HCT116 (cell line): ENCODE measurements at regions of chr5 and their contacts with region 1.

Region 1: GRCh38 chr5:174520420-174521380 is 203.7 kb upstream of the MSX2 start:
- DNase-seq: peak; percentile 93
- ATAC-seq: peak; percentile 92
- H3K4me3 ChIP-seq: peak overlapping the region in 1 of 2 experiments; percentile 8; a peak in 1 of 4 replicates
- H3K27ac ChIP-seq: peak overlapping the region; percentile 17; the same call in 1 of the 2 replicates
- H3K4me1 ChIP-seq: peaks cover 23 to 44% of the 10 kb centered on the region in 2 experiments
- H3K27me3 ChIP-seq: peaks cover 54% of the 10 kb centered on the region; the same call in 1 of the 2 replicates
- CTCF ChIP-seq: no peak
- POLR2A ChIP-seq: no peak
- RAD21 ChIP-seq: peak; percentile 36; the same call in 1 of the 2 replicates

Region 2: DNA sequence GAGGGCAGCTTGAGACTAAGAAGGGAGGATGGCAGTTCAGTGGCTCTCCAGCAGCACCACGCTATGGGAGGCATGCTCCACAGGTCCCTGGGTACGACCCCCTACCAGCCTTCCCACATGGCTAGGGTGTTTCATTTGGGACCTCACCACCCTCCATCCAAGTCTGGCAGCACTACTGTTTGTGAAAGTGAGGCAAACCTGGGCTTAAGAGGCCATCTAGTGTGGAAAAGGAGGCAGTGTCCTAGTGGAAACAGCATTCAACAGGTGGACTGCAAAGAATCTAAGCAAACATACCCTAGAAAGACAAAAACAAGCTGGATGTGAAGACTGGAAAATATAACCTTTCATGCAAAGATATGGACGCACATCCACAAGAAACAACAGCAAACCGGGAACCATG is 536.5 kb before region 1 on chr5:
- CTCF ChIA-PET with region 1: no interaction called
- POLR2A ChIA-PET with region 1: no interaction called
- RAD21 ChIA-PET with region 1: no interaction called
- intact Hi-C with region 1: no loop called
- DNase-seq: peak; percentile 34
- ATAC-seq: peak; percentile 83
- H3K4me3 ChIP-seq: no peak overlapping the region
- H3K27ac ChIP-seq: no peak overlapping the region
- H3K4me1 ChIP-seq: no peaks in the 10 kb centered on the region
- H3K27me3 ChIP-seq: peaks cover 7% of the 10 kb centered on the region; the same call in 1 of the 2 replicates
- CTCF ChIP-seq: peak; percentile 42 to 65 (median 58); a peak in 5 of 6 replicates
- POLR2A ChIP-seq: no peak
- RAD21 ChIP-seq: peak; percentile 81

Region 3: DNA sequence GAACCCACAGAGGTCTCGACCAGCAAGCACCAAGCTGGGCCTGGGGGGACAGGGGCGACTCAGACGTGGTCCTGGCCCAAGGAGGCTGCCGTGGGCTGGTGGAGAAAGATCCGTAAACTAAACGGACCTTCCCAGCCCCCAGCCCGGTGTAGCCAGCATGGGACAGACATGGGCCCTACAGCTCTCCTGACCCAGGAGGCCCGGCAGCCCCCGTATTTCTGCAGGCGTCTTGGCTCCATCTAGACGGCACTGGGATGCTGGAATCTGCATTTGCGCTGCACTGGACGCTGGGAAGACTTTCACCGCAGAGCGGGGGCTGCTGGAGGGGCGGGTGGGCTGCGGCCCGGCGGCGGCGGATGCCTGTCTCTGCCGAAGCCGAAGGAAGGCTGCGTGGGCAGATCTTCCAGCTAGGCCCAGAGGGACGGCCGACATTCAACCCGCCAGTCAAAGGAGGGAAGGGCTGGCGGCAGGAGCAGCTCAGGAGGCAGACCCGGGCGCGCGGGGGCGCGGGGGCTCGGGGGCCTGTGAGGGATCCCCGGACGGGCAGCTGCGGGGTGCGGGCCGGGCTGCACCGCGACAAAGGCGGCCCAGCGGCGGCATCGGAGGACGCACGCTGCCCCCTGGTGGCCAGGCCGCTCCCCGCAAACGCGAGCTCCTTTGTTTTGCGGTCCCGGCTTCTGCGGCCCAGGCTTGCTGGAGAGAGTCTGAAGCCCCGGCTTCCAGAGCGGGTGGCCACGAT is 209.0 kb before region 1 on chr5:
- CTCF ChIA-PET with region 1: no interaction called
- POLR2A ChIA-PET with region 1: no interaction called
- RAD21 ChIA-PET with region 1: no interaction called
- intact Hi-C with region 1: no loop called
- DNase-seq: no peak
- ATAC-seq: peak; percentile 92
- H3K4me3 ChIP-seq: no peak overlapping the region
- H3K27ac ChIP-seq: no peak overlapping the region
- H3K4me1 ChIP-seq: no peaks in the 10 kb centered on the region; a peak in 1 of 4 replicates
- H3K27me3 ChIP-seq: peaks cover 4% of the 10 kb centered on the region; the same call in 1 of the 2 replicates
- CTCF ChIP-seq: peak; percentile 64 to 73 (median 70)
- POLR2A ChIP-seq: no peak
- RAD21 ChIP-seq: peak; percentile 89

Region 4: DNA sequence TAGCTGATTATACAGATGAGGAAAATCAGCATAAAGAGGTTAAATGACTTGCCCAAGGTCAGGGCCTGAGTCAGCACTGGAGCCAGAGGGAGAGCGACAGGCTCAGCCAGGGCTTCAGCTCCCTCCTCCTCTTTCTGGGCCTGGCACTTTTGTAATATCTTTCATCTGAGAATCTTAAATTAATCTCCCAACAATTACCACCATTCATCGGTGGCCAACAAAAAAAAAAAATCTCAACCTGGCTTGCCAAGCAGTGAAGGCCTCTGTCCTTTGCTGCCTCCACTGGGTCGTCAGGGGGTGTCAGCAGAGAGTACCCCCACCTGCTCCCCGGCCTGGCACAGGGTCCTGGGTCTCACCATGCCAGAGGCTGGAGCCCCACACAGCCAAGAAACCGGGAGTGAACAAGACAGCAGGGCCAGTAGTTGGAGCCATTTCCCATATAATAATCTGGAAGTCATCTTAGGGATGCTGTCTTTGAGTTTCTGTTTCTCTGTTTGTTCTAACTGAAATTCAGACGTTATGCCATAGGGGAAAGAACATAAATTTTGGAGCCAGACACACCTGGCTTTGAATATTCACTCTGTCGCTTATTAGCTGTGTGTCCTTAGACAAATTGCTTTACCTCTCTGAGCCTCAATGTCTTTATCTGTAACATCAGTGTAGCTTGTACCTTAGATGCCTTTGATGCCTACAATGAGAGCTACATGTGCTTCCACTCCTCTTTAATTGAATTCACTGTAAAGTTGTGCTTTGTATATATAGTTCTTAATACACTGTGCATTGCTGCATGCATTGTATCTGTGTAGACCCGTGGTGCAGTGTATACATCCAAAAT is 96.3 kb before region 1 on chr5:
- CTCF ChIA-PET with region 1: interaction called, 6 read pairs
- POLR2A ChIA-PET with region 1: no interaction called
- RAD21 ChIA-PET with region 1: no interaction called
- intact Hi-C with region 1: loop called (anchors 10 kb)
- DNase-seq: no peak
- ATAC-seq: no peak
- H3K4me3 ChIP-seq: no peak overlapping the region
- H3K27ac ChIP-seq: no peak overlapping the region
- H3K4me1 ChIP-seq: peaks cover 9 to 12% of the 10 kb centered on the region in 2 experiments
- H3K27me3 ChIP-seq: no peaks in the 10 kb centered on the region; the same call in 1 of the 2 replicates
- CTCF ChIP-seq: peak; percentile 5 to 38 (median 12); a peak in 3 of 6 replicates
- POLR2A ChIP-seq: no peak
- RAD21 ChIP-seq: peak; percentile 48

Region 5: DNA sequence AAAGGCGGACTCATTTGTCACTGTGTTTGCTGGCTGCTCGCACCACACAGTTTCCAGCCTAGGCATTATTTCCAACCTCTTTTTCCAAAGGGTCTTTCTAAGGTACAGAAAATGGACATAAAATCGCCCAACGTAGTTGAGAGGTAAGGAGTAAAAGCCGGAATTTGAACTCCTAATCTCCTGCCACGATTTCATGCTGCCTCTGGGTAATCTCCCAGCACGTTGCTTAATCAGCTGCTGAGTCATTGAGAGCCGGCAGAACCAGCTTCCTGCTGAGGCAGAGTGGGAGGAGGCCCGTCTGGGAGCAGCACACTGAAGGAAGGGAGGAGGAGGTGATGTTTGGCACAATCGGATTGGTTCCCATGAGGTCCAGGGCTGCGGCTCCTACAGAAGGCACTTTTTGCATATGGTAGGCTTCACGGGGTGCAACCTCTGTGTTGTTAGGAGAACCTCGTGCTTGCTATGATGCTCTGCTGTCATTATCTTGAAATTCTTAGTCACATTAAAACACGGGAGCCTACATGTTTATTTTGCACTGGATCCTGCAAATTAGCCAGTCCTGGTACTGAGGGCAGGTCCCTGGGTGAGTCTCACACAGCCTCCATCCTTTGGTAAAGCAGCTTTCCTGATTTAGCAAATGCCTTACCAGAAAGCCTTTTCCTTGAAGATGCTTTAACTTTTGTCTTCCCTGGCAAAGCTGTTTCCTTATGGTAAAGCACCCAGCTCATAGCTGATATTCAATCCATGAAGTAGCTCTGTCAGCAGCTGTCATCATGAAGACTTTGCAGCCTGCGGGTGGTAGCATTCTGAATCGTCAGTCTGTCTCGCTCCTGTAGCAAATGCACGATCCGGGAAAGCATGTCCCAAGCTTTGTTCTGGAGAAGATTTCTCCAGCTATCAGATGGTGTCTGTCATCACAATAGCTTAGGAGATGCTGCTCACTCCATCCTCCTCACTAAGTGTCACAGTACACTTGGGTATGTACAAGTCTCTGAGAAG is 12.1 kb after region 1 on chr5:
- CTCF ChIA-PET with region 1: interaction called, 3 read pairs
- POLR2A ChIA-PET with region 1: no interaction called
- RAD21 ChIA-PET with region 1: no interaction called
- intact Hi-C with region 1: loop called (anchors 1 kb)
- DNase-seq: peak; percentile 91
- ATAC-seq: peak; percentile 82
- H3K4me3 ChIP-seq: peak overlapping the region; percentile 3 to 40; a peak in 3 of 4 replicates
- H3K27ac ChIP-seq: peak overlapping the region; percentile 68
- H3K4me1 ChIP-seq: peaks cover 66 to 87% of the 10 kb centered on the region in 2 experiments
- H3K27me3 ChIP-seq: no peaks in the 10 kb centered on the region
- CTCF ChIP-seq: no peak
- POLR2A ChIP-seq: peak; percentile 47
- RAD21 ChIP-seq: no peak

Region 6: GRCh38 chr5:174581479-174581878 is 60.8 kb after region 1 on chr5:
- CTCF ChIA-PET with region 1: no interaction called
- POLR2A ChIA-PET with region 1: no interaction called
- RAD21 ChIA-PET with region 1: no interaction called
- intact Hi-C with region 1: no loop called
- DNase-seq: no peak
- ATAC-seq: peak; percentile 83
- H3K4me3 ChIP-seq: no peak overlapping the region
- H3K27ac ChIP-seq: no peak overlapping the region
- H3K4me1 ChIP-seq: peaks cover 4 to 39% of the 10 kb centered on the region in 2 experiments; a peak in 3 of 4 replicates
- H3K27me3 ChIP-seq: no peaks in the 10 kb centered on the region
- CTCF ChIP-seq: peak; percentile 79 to 82 (median 79)
- POLR2A ChIP-seq: no peak
- RAD21 ChIP-seq: peak; percentile 76

Region 7: GRCh38 chr5:174706997-174707572 is 186.4 kb after region 1 on chr5:
- CTCF ChIA-PET with region 1: no interaction called
- POLR2A ChIA-PET with region 1: no interaction called
- RAD21 ChIA-PET with region 1: no interaction called
- intact Hi-C with region 1: no loop called
- DNase-seq: no peak
- ATAC-seq: no peak
- H3K4me3 ChIP-seq: no peak overlapping the region
- H3K27ac ChIP-seq: no peak overlapping the region
- H3K4me1 ChIP-seq: peaks cover 3 to 8% of the 10 kb centered on the region in 2 experiments; a peak in 3 of 4 replicates
- H3K27me3 ChIP-seq: no peaks in the 10 kb centered on the region
- CTCF ChIP-seq: no peak
- POLR2A ChIP-seq: no peak
- RAD21 ChIP-seq: no peak

Region 8: GRCh38 chr5:174724491-174725260 is 204.0 kb after region 1 on chr5 and contains the start of gene MSX2:
- CTCF ChIA-PET with region 1: no interaction called
- POLR2A ChIA-PET with region 1: no interaction called
- RAD21 ChIA-PET with region 1: no interaction called
- intact Hi-C with region 1: loop called (anchors 5 kb)
- DNase-seq: peak; percentile 80
- ATAC-seq: peak; percentile 92
- H3K4me3 ChIP-seq: peak within 1 kb of the TSS; percentile 77 to 83
- H3K27ac ChIP-seq: peak within 1 kb of the TSS; percentile 75
- H3K4me1 ChIP-seq: peaks cover 7 to 35% of the 10 kb centered on the region in 2 experiments; a peak in 3 of 4 replicates
- H3K27me3 ChIP-seq: peaks cover 19% of the 10 kb centered on the region; the same call in 1 of the 2 replicates
- CTCF ChIP-seq: no peak
- POLR2A ChIP-seq: no peak
- RAD21 ChIP-seq: no peak
- total RNA-seq, gene MSX2: 11.3 TPM